ENCODE measurements at regions of chr2 and their contacts with region 1.

Region 1: GRCh38 chr2:181058378-181059269 is 78.2 kb downstream of the UBE2E3 start:
- DNase-seq: peak; percentile 53
- H3K4me3 Mint-ChIP-seq: no peak overlapping the region
- H3K27ac Mint-ChIP-seq: no peak overlapping the region
- H3K4me1 Mint-ChIP-seq: peaks cover 16% of the 10 kb centered on the region
- H3K27me3 Mint-ChIP-seq: no peaks in the 10 kb centered on the region
- CTCF ChIP-seq: peak; percentile 80

Region 2: DNA sequence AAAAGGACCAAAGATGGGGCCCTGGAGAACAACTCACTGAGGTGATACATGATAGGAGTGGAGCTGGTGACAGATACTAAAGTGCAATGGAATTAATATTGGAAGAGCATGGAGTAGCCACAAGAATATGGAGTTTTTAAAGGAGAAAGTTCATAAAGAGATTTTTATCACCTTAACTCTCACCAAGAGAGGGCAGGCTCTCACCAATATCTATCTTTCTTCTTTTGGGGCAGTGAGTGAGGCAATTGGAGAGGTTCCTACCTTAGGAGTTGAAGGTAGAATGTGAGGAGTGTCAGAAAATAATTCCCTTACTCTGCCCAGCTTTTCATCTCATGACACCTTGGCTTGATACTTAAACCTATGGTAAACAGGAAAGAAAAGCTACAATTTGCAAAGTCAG is 817.9 kb before region 1 on chr2:
- CTCF ChIA-PET with region 1: interaction called, 13 read pairs
- POLR2A ChIA-PET with region 1: no interaction called
- intact Hi-C with region 1: loop called (anchors 1 kb)
- DNase-seq: peak; percentile 51
- H3K4me3 Mint-ChIP-seq: no peak overlapping the region
- H3K27ac Mint-ChIP-seq: no peak overlapping the region
- H3K4me1 Mint-ChIP-seq: peaks cover 6% of the 10 kb centered on the region
- H3K27me3 Mint-ChIP-seq: no peaks in the 10 kb centered on the region
- CTCF ChIP-seq: peak; percentile 49

Region 3: GRCh38 chr2:180385601-180386201 is 672.9 kb before region 1 on chr2:
- CTCF ChIA-PET with region 1: no interaction called
- POLR2A ChIA-PET with region 1: no interaction called
- intact Hi-C with region 1: loop called (anchors 2 kb)
- DNase-seq: peak; percentile 78
- H3K4me3 Mint-ChIP-seq: no peak overlapping the region
- H3K27ac Mint-ChIP-seq: peak overlapping the region; percentile 78
- H3K4me1 Mint-ChIP-seq: peaks cover 16% of the 10 kb centered on the region
- H3K27me3 Mint-ChIP-seq: no peaks in the 10 kb centered on the region
- CTCF ChIP-seq: no peak

Region 4: GRCh38 chr2:180520206-180520605 is 538.4 kb before region 1 on chr2:
- CTCF ChIA-PET with region 1: interaction called, 3 read pairs
- POLR2A ChIA-PET with region 1: no interaction called
- intact Hi-C with region 1: loop called (anchors 5 kb)
- DNase-seq: peak; percentile 23
- H3K4me3 Mint-ChIP-seq: no peak overlapping the region
- H3K27ac Mint-ChIP-seq: peak overlapping the region; percentile 57
- H3K4me1 Mint-ChIP-seq: peaks cover 29% of the 10 kb centered on the region
- H3K27me3 Mint-ChIP-seq: no peaks in the 10 kb centered on the region
- CTCF ChIP-seq: no peak

Region 5: DNA sequence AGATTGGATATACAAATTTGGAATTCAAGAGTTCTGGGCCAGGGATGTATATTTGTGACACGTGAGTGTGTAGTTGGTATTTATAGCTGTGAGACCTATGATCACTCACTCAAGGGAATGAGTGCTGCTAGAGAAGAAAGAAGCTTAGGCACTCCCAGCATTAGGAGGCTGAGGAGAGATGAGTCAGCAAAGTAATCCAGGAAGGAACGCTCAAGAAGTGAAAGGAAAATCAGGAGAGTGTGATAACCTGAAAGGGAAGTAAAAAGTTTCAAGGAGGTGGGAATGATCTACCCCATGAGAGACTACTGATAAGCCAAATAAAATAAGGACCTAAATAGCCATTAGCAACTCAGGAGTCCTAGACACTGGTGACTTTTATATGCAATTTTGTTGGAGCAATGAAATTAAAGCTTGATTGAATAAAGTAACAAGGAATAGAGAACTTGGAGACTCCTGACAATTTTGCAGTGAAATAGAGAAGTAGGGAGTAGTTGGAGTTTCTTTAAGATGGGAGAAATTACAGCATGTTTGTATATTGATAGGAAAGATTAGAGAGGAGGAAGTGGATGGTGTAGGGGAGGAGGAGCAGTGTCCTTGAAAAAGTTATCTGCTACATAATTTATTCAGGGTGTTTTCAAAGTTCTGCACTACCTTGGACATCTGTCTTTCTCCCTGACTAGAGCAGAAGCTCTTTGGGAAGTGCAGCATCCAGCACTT is 11.7 kb after region 1 on chr2:
- CTCF ChIA-PET with region 1: interaction called, 25 read pairs
- POLR2A ChIA-PET with region 1: interaction called, 7 read pairs
- intact Hi-C with region 1: no loop called
- DNase-seq: peak; percentile 73
- H3K4me3 Mint-ChIP-seq: no peak overlapping the region
- H3K27ac Mint-ChIP-seq: no peak overlapping the region
- H3K4me1 Mint-ChIP-seq: peaks cover 24% of the 10 kb centered on the region
- H3K27me3 Mint-ChIP-seq: no peaks in the 10 kb centered on the region
- CTCF ChIP-seq: no peak

Measured in MCF 10A (cell line).